ENCODE measurements at regions of chr12 and their contacts with region 1.

Region 1: DNA sequence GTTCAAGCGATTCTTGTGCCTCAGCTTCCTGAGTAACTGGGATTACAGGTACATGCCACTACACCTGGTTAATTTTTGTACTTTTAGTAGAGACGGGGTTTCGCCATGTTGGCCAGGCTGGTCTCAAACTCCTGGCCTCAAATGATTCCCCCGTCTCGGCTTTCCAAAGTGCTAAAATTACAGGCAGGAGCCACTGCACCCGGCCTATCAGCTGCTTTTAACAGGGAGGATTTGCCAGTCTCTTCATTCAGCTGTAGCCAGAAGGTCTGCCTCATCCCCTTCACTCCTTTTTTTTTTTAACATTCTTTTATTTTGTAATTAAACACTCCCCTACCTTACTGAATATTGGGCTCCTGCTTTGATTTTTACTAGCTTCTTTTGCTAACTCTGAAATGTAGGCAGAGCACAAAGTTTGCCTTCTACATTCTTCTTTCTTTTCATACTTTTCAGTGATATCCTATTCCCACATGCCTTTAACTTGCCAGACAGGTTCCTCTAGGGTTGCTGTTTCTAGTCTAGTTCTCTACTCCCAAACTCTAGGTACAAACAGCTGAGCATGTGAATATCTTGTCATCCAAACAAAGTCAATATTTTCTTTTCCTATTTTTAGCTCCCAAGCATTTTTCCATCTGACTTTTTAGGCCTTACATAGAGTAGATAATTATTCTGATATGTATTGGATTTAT is 73.9 kb upstream of the DNM1L start:
- DNase-seq: peak; percentile 33 to 73
- H3K4me3 ChIP-seq: no peak overlapping the region
- H3K27ac ChIP-seq: peak overlapping the region; percentile 43
- H3K4me1 ChIP-seq: peaks cover 18% of the 10 kb centered on the region
- H3K27me3 ChIP-seq: no peaks in the 10 kb centered on the region
- CTCF ChIP-seq: no peak

Region 2: DNA sequence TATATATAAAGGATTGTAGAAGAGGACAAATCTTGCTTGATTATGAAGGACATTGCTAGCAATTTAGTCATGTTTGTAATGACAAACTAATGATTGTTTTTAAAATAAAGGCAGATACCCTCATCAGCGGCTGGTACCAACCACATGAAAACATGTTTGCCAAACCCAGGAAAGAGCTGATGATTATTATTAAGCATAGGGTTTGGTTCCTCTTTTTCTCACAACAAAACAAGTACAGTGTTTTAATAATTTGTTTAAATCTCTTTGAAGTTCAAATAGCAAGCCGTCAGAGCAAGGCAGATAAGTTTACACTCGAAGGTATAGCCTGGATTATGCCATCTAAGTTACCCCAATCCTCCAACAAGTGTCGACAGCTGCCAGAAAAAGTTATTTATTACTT is 1273.9 kb before region 1 on chr12:
- CTCF ChIA-PET with region 1: interaction called, 16 read pairs
- POLR2A ChIA-PET with region 1: no interaction called
- intact Hi-C with region 1: no loop called
- DNase-seq: no peak
- H3K4me3 ChIP-seq: no peak overlapping the region
- H3K27ac ChIP-seq: no peak overlapping the region
- H3K4me1 ChIP-seq: 0 out of 2 replicates have a peak, but pooled peaks cover 6% of the 10 kb centered on the region
- H3K27me3 ChIP-seq: no peaks in the 10 kb centered on the region
- CTCF ChIP-seq: no peak

Region 3: DNA sequence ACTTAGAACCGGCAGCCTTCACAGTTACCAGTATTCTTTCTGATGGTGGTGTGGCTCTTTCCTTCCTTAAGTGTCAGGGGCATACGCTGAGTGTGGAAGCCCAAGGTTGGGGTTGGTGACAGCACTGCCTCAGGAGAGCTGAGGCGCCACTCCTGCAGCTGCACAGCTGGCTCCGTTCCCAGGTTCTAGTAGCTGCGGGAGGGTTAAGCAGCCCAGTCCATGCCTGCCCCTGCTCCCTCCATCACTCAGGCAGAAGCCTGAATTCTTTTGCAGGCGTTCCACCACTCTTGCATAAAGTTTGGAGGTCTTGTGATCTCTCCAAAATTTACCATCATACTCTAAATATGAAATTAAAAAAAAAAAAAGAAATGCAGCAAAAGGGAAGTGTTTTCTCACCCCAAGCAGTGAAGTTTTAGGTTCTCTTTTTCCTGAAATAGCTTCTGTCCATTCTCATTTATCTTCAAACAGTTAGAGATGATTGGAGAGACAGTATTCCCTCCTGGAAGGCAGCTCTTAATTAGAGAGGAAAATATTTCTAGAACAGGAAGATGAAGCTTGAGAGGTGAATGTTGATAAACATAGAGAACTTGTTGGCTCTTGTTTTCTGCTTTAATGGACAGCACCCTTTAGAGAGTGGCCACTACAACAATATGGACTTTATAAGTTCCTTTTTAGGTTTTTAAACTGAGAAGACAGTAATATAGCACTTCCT is 69.7 kb before region 1 on chr12:
- CTCF ChIA-PET with region 1: no interaction called
- POLR2A ChIA-PET with region 1: no interaction called
- intact Hi-C with region 1: no loop called
- DNase-seq: peak in 1 of 2 experiments; percentile 29
- H3K4me3 ChIP-seq: no peak overlapping the region
- H3K27ac ChIP-seq: no peak overlapping the region
- H3K4me1 ChIP-seq: peaks cover 11% of the 10 kb centered on the region; the same call in 1 of the 2 replicates
- H3K27me3 ChIP-seq: no peaks in the 10 kb centered on the region
- CTCF ChIP-seq: no peak

Region 4: DNA sequence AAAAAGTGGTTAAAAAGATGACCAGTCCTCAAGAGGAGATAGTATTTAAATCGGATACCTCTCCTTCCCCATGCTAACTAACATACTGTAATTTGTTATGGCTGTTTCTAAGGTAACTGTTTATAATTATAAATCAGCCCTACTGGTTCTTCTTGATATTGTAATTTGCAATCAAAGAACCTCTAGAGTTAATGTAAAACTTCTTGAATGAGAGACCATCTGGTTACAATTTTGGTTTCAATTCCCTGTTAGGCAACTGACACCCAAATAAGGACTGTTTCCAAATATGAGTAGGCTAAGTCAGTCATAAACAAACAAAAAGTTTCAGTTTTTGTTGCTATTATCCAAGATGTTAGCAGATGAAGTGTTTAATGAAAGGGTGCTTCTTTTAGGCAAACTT is 46.3 kb before region 1 on chr12:
- CTCF ChIA-PET with region 1: no interaction called
- POLR2A ChIA-PET with region 1: no interaction called
- intact Hi-C with region 1: no loop called
- DNase-seq: no peak
- H3K4me3 ChIP-seq: no peak overlapping the region
- H3K27ac ChIP-seq: no peak overlapping the region
- H3K4me1 ChIP-seq: no peaks in the 10 kb centered on the region
- H3K27me3 ChIP-seq: no peaks in the 10 kb centered on the region
- CTCF ChIP-seq: no peak

Region 5: GRCh38 chr12:32569259-32569658 is 35.9 kb before region 1 on chr12:
- CTCF ChIA-PET with region 1: no interaction called
- POLR2A ChIA-PET with region 1: no interaction called
- intact Hi-C with region 1: no loop called
- DNase-seq: no peak
- H3K4me3 ChIP-seq: no peak overlapping the region
- H3K27ac ChIP-seq: peak overlapping the region; percentile 84
- H3K4me1 ChIP-seq: peaks cover 33% of the 10 kb centered on the region
- H3K27me3 ChIP-seq: no peaks in the 10 kb centered on the region
- CTCF ChIP-seq: no peak

Region 6: DNA sequence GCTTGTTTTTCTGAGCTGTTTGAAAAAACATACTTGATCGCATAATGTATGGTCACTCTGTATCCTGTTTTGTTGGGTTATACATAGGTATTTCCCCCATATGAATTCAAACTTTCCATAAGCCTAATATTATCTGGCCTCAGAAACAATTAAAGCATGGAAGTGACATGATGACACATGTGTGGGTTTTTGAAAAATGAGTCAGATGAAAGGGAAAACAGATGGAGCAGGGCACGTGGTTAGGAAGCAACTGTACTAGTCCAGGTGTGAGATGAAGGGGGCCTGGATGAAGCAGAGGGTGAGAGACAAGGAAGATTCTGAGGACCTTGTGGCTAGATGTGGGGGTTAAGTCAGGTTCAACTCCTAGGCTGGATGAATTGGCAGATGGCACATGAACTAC is 18.8 kb before region 1 on chr12:
- CTCF ChIA-PET with region 1: no interaction called
- POLR2A ChIA-PET with region 1: interaction called, 16 read pairs
- intact Hi-C with region 1: no loop called
- DNase-seq: no peak
- H3K4me3 ChIP-seq: no peak overlapping the region
- H3K27ac ChIP-seq: no peak overlapping the region
- H3K4me1 ChIP-seq: 0 out of 2 replicates have a peak, but pooled peaks cover 3% of the 10 kb centered on the region
- H3K27me3 ChIP-seq: no peaks in the 10 kb centered on the region
- CTCF ChIP-seq: no peak

Region 7: GRCh38 chr12:32666510-32666909 is 61.3 kb after region 1 on chr12:
- CTCF ChIA-PET with region 1: no interaction called
- POLR2A ChIA-PET with region 1: no interaction called
- intact Hi-C with region 1: no loop called
- DNase-seq: no peak
- H3K4me3 ChIP-seq: no peak overlapping the region
- H3K27ac ChIP-seq: no peak overlapping the region
- H3K4me1 ChIP-seq: no peaks in the 10 kb centered on the region
- H3K27me3 ChIP-seq: no peaks in the 10 kb centered on the region
- CTCF ChIP-seq: no peak

Region 8: GRCh38 chr12:33264684-33265384 is 659.7 kb after region 1 on chr12:
- CTCF ChIA-PET with region 1: interaction called, 11 read pairs
- POLR2A ChIA-PET with region 1: no interaction called
- intact Hi-C with region 1: no loop called
- DNase-seq: no peak
- H3K4me3 ChIP-seq: no peak overlapping the region
- H3K27ac ChIP-seq: no peak overlapping the region
- H3K4me1 ChIP-seq: no peaks in the 10 kb centered on the region
- H3K27me3 ChIP-seq: no peaks in the 10 kb centered on the region
- CTCF ChIP-seq: no peak